ENCODE measurements at regions of chr6 and their contacts with region 1.

Region 1: DNA sequence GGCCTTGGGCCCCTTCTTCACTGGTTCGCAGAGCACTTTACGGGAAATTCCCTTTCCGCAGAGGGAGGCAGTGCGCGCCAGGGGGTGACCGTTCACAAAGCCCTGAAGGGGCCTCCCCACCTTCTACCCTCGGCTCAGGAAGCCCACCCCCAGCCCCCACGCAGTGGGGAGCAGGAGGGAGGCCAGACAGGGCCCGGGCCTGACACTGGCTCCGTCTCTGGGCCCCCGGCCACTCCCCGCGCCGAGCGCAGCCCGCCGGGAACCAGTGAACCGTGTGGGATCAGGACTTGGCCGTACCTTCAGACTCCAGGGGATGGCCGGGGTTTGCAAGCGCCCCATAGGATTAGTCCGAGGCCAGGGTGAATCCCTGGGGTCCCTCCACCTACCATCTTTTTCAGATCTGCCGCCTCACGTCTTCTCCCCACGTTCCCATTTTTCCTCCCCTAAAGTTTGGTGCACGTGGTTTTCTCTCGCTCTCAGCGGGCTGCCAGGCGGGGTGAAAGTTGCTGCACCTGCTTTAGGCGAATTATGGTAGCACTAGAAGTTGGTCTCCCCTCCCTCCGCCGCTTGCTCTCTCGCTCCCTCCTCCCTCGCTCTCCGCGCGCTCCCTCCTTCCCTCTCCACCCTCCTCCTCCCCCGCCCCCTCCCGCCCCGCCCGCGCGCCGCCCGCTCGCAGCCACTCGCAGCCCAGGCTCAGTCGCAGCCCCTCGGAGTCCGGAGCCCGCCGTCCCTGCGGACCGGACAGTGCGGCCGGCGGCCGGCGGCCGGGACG is at the start of gene FOXP4:
- DNase-seq: peak; percentile 76
- ATAC-seq: peak; percentile 77
- H3K4me3 Mint-ChIP-seq: peak within 1 kb of the TSS; percentile 97
- H3K27ac Mint-ChIP-seq: peak within 1 kb of the TSS; percentile 91
- H3K4me1 Mint-ChIP-seq: peaks cover 43% of the 10 kb centered on the region
- H3K27me3 Mint-ChIP-seq: no peaks in the 10 kb centered on the region
- CTCF ChIP-seq: no peak
- total RNA-seq, gene FOXP4: 37.8 and 40.7 TPM in 2 replicates

Region 2: DNA sequence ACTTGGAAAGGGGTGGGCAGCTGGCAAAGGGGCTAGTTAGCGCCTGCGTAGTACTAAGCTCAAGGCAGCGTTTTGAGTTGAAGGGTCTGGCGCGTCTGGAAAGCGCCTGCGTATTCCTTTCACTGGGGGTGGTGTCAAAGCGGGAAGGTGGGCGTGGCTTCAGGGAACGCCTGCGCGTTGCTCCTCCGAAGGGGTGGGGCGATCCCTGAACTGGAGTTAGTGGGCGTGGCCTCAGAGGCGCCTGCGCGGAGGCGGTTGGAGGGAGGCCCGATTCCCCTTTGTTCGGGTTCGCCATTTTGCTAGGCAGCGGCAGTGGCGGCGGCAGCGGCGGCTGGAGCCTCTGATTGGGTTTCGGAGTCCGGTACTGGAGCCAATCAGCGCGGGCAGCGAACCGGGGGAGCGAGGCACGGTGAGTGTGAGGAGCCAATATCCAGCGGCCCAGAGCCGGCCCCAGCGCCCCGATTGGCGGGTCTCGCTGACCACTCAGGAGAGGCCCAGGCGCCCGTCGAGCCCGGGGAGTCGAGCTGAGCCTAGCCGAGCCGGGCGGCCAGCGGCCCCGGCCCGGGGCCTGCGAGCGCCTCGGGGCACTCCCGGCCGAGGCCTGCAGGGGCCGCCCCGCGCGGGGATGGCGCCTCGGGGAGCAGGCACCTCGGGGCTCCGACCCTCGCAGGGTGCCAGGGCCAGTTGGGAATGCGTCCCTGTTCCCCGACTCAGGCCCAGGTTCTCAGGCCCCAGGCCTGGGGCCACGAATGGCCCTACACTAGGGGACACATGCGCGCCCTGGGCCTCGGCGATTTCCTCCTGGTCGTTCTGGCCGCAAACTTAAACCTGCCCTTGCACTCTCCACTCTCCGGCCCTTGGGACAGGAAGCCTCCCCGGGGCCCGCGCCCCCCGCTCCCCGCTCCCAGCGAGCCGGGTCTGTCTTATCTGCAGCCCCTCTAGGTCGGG is 472.9 kb before region 1 on chr6 and contains the start of gene NFYA:
- CTCF ChIA-PET with region 1: no interaction called
- POLR2A ChIA-PET with region 1: no interaction called
- intact Hi-C with region 1: loop called (anchors 5 kb)
- DNase-seq: peak; percentile 100
- ATAC-seq: peak; percentile 63
- H3K4me3 Mint-ChIP-seq: peak within 1 kb of the TSS; percentile 96
- H3K27ac Mint-ChIP-seq: peak within 1 kb of the TSS; percentile 98
- H3K4me1 Mint-ChIP-seq: peaks cover 47% of the 10 kb centered on the region
- H3K27me3 Mint-ChIP-seq: no peaks in the 10 kb centered on the region
- CTCF ChIP-seq: no peak
- total RNA-seq, gene NFYA: 33.7 and 35.1 TPM in 2 replicates

Region 3: GRCh38 chr6:41386594-41386993 is 159.3 kb before region 1 on chr6:
- CTCF ChIA-PET with region 1: no interaction called
- POLR2A ChIA-PET with region 1: no interaction called
- intact Hi-C with region 1: no loop called
- DNase-seq: no peak
- ATAC-seq: no peak
- H3K4me3 Mint-ChIP-seq: no peak overlapping the region
- H3K27ac Mint-ChIP-seq: no peak overlapping the region
- H3K4me1 Mint-ChIP-seq: no peaks in the 10 kb centered on the region
- H3K27me3 Mint-ChIP-seq: peaks cover 31% of the 10 kb centered on the region
- CTCF ChIP-seq: no peak

Region 4: GRCh38 chr6:41424370-41425058 is 121.4 kb before region 1 on chr6:
- CTCF ChIA-PET with region 1: interaction called, 6 read pairs
- POLR2A ChIA-PET with region 1: interaction called, 6 read pairs
- intact Hi-C with region 1: loop called (anchors 1 kb)
- DNase-seq: peak; percentile 62
- ATAC-seq: peak; percentile 45
- H3K4me3 Mint-ChIP-seq: no peak overlapping the region
- H3K27ac Mint-ChIP-seq: no peak overlapping the region
- H3K4me1 Mint-ChIP-seq: peaks cover 10% of the 10 kb centered on the region
- H3K27me3 Mint-ChIP-seq: peaks cover 11% of the 10 kb centered on the region
- CTCF ChIP-seq: peak; percentile 60

Region 5: GRCh38 chr6:41463062-41463930 is 82.6 kb before region 1 on chr6:
- CTCF ChIA-PET with region 1: interaction called, 4 read pairs
- POLR2A ChIA-PET with region 1: interaction called, 4 read pairs
- intact Hi-C with region 1: loop called (anchors 1 kb)
- DNase-seq: no peak
- ATAC-seq: peak; percentile 82
- H3K4me3 Mint-ChIP-seq: no peak overlapping the region
- H3K27ac Mint-ChIP-seq: no peak overlapping the region
- H3K4me1 Mint-ChIP-seq: peaks cover 2% of the 10 kb centered on the region
- H3K27me3 Mint-ChIP-seq: peaks cover 31% of the 10 kb centered on the region
- CTCF ChIP-seq: peak; percentile 41

Region 6: DNA sequence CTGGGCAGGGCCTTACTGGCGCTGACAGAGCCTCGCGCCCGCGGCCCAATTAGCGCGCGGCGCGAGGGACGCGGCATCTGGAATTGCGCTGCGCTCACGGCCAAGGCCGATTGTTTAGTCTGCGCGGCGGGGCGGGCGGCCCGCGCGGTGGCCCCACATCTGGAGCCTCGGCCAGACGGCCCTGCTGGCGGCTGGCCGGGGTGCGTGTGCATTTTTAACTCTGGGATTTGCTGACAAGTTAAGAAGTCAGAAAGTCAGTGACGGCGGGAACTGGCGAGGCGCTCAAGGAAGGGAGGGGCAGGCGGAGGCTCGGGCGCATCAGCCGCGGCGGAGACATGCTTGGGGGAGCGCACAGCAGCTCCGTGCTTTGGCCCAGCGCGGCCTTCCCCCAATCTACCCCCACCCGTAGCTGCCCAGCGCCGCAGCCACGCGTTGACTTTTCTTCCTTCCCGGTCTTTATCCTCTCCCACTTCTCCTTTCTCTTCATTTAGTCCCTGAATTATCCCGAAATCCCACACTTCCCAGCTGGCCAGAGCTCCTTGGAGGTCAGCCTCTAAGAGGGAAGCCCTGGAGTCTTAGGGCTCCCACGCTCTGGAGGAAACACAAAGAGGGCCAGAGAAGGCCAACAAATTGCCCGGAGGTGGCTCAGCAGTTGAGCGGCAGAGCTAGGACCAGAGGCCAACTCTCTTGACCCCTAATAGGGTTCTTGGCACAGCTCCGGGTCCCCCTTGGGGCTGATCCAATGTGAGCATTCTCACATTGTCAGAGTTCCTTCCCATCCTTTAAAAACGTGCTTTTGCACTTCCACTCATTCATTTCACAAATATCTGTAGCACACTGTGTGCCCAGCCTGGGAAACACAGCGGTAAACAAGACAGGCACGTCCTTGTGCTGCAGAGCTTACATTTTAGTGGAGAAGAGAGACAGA is 40.5 kb before region 1 on chr6:
- CTCF ChIA-PET with region 1: no interaction called
- POLR2A ChIA-PET with region 1: interaction called, 34 read pairs
- intact Hi-C with region 1: loop called (anchors 1 kb)
- DNase-seq: peak; percentile 66
- ATAC-seq: peak; percentile 86
- H3K4me3 Mint-ChIP-seq: peak overlapping the region; percentile 81
- H3K27ac Mint-ChIP-seq: peak overlapping the region; percentile 92
- H3K4me1 Mint-ChIP-seq: peaks cover 43% of the 10 kb centered on the region
- H3K27me3 Mint-ChIP-seq: no peaks in the 10 kb centered on the region
- CTCF ChIP-seq: no peak

Region 7: GRCh38 chr6:41560431-41561192 is 14.7 kb after region 1 on chr6:
- CTCF ChIA-PET with region 1: no interaction called
- POLR2A ChIA-PET with region 1: interaction called, 8 read pairs
- intact Hi-C with region 1: loop called (anchors 1 kb)
- DNase-seq: peak; percentile 55
- ATAC-seq: peak; percentile 85
- H3K4me3 Mint-ChIP-seq: peak overlapping the region; percentile 89
- H3K27ac Mint-ChIP-seq: peak overlapping the region; percentile 75
- H3K4me1 Mint-ChIP-seq: peaks cover 35% of the 10 kb centered on the region
- H3K27me3 Mint-ChIP-seq: no peaks in the 10 kb centered on the region
- CTCF ChIP-seq: no peak

Region 8: GRCh38 chr6:43181942-43182860 is 1636.3 kb after region 1 on chr6 and contains the start of gene CUL9:
- CTCF ChIA-PET with region 1: no interaction called
- POLR2A ChIA-PET with region 1: no interaction called
- intact Hi-C with region 1: loop called (anchors 5 kb)
- DNase-seq: peak; percentile 86
- ATAC-seq: peak; percentile 99
- H3K4me3 Mint-ChIP-seq: peak within 1 kb of the TSS; percentile 94
- H3K27ac Mint-ChIP-seq: peak within 1 kb of the TSS; percentile 90
- H3K4me1 Mint-ChIP-seq: peaks cover 35% of the 10 kb centered on the region
- H3K27me3 Mint-ChIP-seq: no peaks in the 10 kb centered on the region
- CTCF ChIP-seq: no peak
- total RNA-seq, gene CUL9: 69.2 and 70.8 TPM in 2 replicates